Activated naive CD4-positive, alpha-beta T cell treated with anti-CD3 and anti-CD28 coated beads for 36 hours (primary cell): ENCODE measurements at regions of chr20 and their contacts with region 1.

Region 1: DNA sequence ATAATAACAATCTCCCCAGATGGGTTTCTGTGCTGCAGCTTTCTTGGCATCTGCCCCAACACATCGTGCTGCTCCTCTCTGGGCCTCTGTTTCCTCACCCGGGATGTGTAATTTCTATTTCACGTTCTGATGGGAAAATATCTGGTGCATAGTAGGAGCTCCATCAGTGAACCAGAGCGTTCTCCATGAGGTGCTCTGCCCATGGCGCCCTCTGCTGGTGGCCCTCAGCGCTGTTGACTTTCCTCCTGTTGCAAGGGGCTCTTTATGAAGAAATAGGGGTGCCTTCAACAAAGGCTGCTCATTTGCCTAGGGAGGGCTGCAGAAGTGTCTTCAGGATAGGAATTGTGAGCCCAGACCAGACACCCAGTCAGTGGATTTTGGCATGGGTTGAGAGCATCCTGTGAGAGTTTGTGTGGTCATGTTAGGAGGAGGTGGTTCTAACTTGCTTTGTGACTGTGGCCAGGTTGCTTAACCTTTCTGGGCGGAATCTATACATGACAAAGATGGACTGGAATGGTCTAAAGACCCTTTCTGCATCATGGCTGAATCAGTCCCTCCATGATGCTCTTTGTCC is 8.1 kb downstream of the SCRT2 start:
- DNase-seq: peak; percentile 76
- H3K4me3 Mint-ChIP-seq: no peak overlapping the region
- H3K27ac Mint-ChIP-seq: no peak overlapping the region
- H3K4me1 Mint-ChIP-seq: peaks cover 4% of the 10 kb centered on the region
- H3K27me3 Mint-ChIP-seq: peaks cover 61% of the 10 kb centered on the region

Region 2: GRCh38 chr20:433300-433975 is 234.0 kb before region 1 on chr20:
- CTCF ChIA-PET with region 1: no interaction called
- intact Hi-C with region 1: no loop called
- DNase-seq: peak; percentile 80
- H3K4me3 Mint-ChIP-seq: peak overlapping the region; percentile 55
- H3K27ac Mint-ChIP-seq: peak overlapping the region; percentile 97
- H3K4me1 Mint-ChIP-seq: peaks cover 59% of the 10 kb centered on the region
- H3K27me3 Mint-ChIP-seq: no peaks in the 10 kb centered on the region

Region 3: DNA sequence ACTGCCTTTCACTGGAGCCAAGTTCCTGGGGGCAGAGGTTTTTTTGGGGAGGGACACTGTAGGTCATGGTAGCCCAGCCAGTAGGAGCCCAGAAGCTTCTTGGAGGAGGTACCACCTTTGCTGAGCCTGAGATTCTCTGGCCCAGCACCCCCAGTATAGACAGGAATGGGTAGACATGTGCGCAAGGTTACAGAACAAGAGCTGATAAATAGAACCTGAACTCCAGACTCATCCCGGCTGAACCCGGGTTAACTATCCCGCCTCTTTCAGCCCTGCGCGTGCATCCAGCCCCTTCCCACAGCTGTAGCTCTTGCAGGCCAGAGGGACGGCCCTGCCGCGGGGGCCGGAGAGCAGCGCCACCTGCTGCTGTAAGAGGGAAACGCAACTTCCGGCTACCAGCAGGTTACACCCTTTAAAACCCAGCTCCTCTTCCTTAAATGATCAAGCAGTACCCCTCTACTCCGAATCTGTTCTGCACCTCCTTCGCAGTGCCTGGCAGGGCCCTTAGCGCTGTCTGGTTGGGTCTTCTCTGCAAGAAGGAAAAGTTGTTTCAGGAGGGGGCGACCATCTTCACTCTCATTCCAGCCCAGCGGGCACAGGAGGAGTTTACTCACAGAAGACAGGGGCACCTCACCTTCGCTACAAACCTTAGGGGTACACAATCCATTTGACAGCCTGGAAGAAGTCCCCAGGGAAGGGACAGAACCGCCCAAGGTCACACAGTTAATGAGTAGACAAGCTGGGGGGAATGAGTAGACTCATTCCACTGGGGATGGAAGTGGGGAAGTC is 22.0 kb before region 1 on chr20:
- CTCF ChIA-PET with region 1: interaction called, 11 read pairs
- intact Hi-C with region 1: no loop called
- DNase-seq: peak; percentile 76
- H3K4me3 Mint-ChIP-seq: no peak overlapping the region
- H3K27ac Mint-ChIP-seq: no peak overlapping the region
- H3K4me1 Mint-ChIP-seq: peaks cover 9% of the 10 kb centered on the region
- H3K27me3 Mint-ChIP-seq: peaks cover 21% of the 10 kb centered on the region

Region 4: DNA sequence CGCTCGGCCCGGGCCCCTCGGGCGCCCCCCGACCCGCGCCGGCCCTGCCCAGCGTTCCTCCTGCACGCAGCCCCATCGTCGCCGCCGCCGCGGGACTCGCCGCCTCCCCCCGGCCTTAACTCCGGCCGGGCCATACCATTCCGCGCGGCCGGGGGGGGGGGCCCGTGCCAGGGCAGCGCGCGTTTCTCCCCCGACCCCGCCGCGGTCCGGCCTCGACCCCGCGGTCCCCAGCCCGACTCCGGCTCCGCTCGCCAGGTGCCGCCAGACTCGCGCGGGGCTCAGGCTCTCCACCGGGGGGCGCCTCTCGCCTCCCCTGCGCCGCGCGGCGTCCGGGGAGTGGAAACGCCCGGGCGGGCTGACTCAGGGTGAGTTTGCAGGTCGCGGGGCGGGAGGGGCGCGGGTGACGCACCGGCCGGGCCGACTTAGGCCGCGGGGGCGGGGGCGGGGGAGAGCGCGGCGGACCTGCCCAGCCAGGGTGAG is 14.3 kb before region 1 on chr20 and contains the start of gene SRXN1:
- CTCF ChIA-PET with region 1: interaction called, 8 read pairs
- intact Hi-C with region 1: loop called (anchors 1 kb)
- DNase-seq: peak; percentile 86
- H3K4me3 Mint-ChIP-seq: peak within 1 kb of the TSS; percentile 72
- H3K27ac Mint-ChIP-seq: peak within 1 kb of the TSS; percentile 4
- H3K4me1 Mint-ChIP-seq: peaks cover 8% of the 10 kb centered on the region
- H3K27me3 Mint-ChIP-seq: peaks cover 13% of the 10 kb centered on the region
- total RNA-seq, gene SRXN1: 6.7 to 6.8 TPM

Region 5: GRCh38 chr20:677957-678356 is 10.5 kb after region 1 on chr20:
- CTCF ChIA-PET with region 1: no interaction called
- intact Hi-C with region 1: no loop called
- DNase-seq: no peak
- H3K4me3 Mint-ChIP-seq: no peak overlapping the region
- H3K27ac Mint-ChIP-seq: no peak overlapping the region
- H3K4me1 Mint-ChIP-seq: peaks cover 6% of the 10 kb centered on the region
- H3K27me3 Mint-ChIP-seq: peaks cover 52% of the 10 kb centered on the region

Region 6: GRCh38 chr20:728248-728944 is 60.9 kb after region 1 on chr20:
- CTCF ChIA-PET with region 1: interaction called, 3 read pairs
- intact Hi-C with region 1: loop called (anchors 5 kb)
- DNase-seq: peak; percentile 69
- H3K4me3 Mint-ChIP-seq: no peak overlapping the region
- H3K27ac Mint-ChIP-seq: no peak overlapping the region
- H3K4me1 Mint-ChIP-seq: no peaks in the 10 kb centered on the region
- H3K27me3 Mint-ChIP-seq: peaks cover 40% of the 10 kb centered on the region

Region 7: DNA sequence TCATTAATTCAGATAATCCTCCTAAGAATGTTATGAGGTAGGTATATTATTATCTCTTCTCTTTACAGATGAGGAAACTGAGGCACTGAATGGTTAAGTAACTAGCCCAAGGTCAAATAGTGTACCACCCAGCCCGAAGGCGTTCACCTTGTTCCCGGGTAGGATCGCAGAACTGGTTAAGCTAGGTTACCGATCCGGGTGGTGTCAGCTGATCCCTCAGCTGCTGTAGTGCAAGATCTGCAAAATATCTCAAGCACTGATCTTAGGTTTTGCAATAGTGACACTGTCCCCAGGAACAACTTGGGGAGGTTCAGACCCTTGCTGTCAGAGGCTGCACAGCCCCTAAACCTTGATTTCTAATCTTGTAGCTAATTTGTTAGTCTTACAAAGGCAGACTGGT is 72.7 kb after region 1 on chr20:
- CTCF ChIA-PET with region 1: interaction called, 15 read pairs
- intact Hi-C with region 1: no loop called
- DNase-seq: no peak
- H3K4me3 Mint-ChIP-seq: no peak overlapping the region
- H3K27ac Mint-ChIP-seq: no peak overlapping the region
- H3K4me1 Mint-ChIP-seq: no peaks in the 10 kb centered on the region
- H3K27me3 Mint-ChIP-seq: peaks cover 15% of the 10 kb centered on the region